ENCODE measurements at regions of chr4 and their contacts with region 1.

Region 1: DNA sequence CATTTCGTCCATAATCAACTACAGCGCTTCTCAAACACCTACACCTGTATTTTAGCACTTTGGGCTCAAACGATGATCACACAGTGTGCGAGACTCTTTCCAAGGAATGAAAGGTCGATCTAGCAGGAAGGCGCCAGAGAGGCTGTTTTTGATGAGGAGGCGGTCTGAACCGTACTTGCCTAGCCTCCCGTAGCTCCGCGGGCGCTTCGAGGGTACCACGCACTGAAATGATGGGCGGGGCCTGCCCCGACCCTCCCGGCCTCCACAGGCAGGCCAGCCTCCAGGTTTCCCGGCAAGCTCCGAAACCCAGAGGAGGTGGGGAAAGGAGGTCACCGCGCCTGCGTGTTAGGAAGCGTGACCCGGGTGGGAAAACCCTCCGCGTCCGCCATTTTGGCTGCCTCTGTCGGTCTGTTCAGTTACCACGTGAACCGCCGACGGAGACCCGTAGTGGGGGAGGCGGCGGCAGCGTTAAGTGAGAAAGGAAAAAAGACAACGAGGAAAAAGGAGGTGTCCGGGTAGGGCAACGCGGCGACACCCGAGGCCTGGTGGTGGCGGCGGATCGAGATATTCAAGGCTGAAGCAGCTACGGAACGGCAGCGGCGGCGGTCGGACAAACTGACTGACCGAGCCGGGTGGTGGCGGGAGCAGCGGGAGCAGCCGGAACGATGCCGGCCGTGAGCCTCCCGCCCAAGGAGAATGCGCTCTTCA is at the start of gene NAA15:
- DNase-seq: peak; percentile 88 to 99 (median 97)
- ATAC-seq: peak; percentile 95
- H3K4me3 ChIP-seq: peak within 1 kb of the TSS; percentile 83
- H3K4me3 Mint-ChIP-seq: peak within 1 kb of the TSS; percentile 96 to 100 (median 100)
- H3K27ac ChIP-seq: peak within 1 kb of the TSS; percentile 92
- H3K27ac Mint-ChIP-seq: peak within 1 kb of the TSS; percentile 97 to 100 (median 99)
- H3K4me1 ChIP-seq: peaks cover 22 to 28% of the 10 kb centered on the region in 2 donors
- H3K4me1 Mint-ChIP-seq: peaks cover 17 to 76% (median 58%) of the 10 kb centered on the region in 7 donors
- H3K27me3 ChIP-seq: no peaks in the 10 kb centered on the region
- H3K27me3 Mint-ChIP-seq: no peaks in the 10 kb centered on the region
- total RNA-seq, gene NAA15: 41.2 to 67.4 (median 49.0) TPM

Region 2: GRCh38 chr4:139015269-139015947 is 285.9 kb before region 1 on chr4 and contains the start of gene NOCT:
- CTCF ChIA-PET with region 1: interaction called, 3 read pairs
- POLR2A ChIA-PET with region 1: interaction called, 6 read pairs
- intact Hi-C with region 1: loop called (anchors 1 kb)
- DNase-seq: peak; percentile 82 to 92 (median 89)
- ATAC-seq: peak; percentile 94
- H3K4me3 ChIP-seq: peak within 1 kb of the TSS; percentile 65
- H3K4me3 Mint-ChIP-seq: peak within 1 kb of the TSS; percentile 82 to 93 (median 88)
- H3K27ac ChIP-seq: peak within 1 kb of the TSS; percentile 91
- H3K27ac Mint-ChIP-seq: peak within 1 kb of the TSS; percentile 76 to 99 (median 94)
- H3K4me1 ChIP-seq: peaks cover 7 to 10% of the 10 kb centered on the region in 2 donors
- H3K4me1 Mint-ChIP-seq: peaks cover 14 to 44% (median 24%) of the 10 kb centered on the region in 7 donors
- H3K27me3 ChIP-seq: no peaks in the 10 kb centered on the region
- H3K27me3 Mint-ChIP-seq: no peaks in the 10 kb centered on the region
- total RNA-seq, gene NOCT: 1.6 to 33.7 (median 8.8) TPM

Region 3: GRCh38 chr4:139229534-139230039 is 71.7 kb before region 1 on chr4:
- CTCF ChIA-PET with region 1: interaction called, 5 read pairs
- POLR2A ChIA-PET with region 1: interaction called, 3 read pairs
- intact Hi-C with region 1: loop called in 1 of 2 experiments (anchors 1 kb)
- DNase-seq: peak in 7 of 9 donors; percentile 11 to 58 (median 37)
- ATAC-seq: peak; percentile 84
- H3K4me3 ChIP-seq: no peak overlapping the region
- H3K4me3 Mint-ChIP-seq: no peak overlapping the region
- H3K27ac ChIP-seq: no peak overlapping the region
- H3K27ac Mint-ChIP-seq: no peak overlapping the region
- H3K4me1 ChIP-seq: no peaks in the 10 kb centered on the region
- H3K4me1 Mint-ChIP-seq: peaks cover 0 to 7% (median 4%) of the 10 kb centered on the region in 7 donors
- H3K27me3 ChIP-seq: no peaks in the 10 kb centered on the region
- H3K27me3 Mint-ChIP-seq: no peaks in the 10 kb centered on the region

Region 4: DNA sequence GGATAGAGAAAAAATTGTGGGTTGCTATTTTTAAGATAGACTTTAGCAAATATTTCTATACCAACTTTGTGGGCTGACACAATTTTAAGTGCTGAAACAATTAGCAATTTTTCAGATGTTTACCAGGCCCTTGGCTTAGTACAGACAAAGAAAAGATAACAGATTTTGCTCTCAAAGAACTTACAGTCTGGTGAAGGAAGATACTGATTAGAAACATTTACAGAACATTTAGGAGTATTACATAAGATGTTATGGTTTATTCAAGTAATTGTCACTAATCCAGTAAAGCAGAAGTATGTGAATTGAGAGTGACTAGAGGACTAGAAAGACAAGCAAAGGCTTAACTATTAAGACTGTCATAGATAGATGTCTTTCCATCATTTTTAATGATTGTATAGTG is 36.3 kb after region 1 on chr4:
- CTCF ChIA-PET with region 1: no interaction called
- POLR2A ChIA-PET with region 1: interaction called, 5 read pairs
- intact Hi-C with region 1: loop called in 1 of 2 experiments (anchors 5 kb)
- DNase-seq: no peak
- ATAC-seq: no peak
- H3K4me3 ChIP-seq: no peak overlapping the region
- H3K4me3 Mint-ChIP-seq: no peak overlapping the region
- H3K27ac ChIP-seq: no peak overlapping the region
- H3K27ac Mint-ChIP-seq: peak overlapping the region in 3 of 9 donors; percentile 1 to 29 (median 20)
- H3K4me1 ChIP-seq: no peaks in the 10 kb centered on the region
- H3K4me1 Mint-ChIP-seq: peaks cover 12 to 31% (median 15%) of the 10 kb centered on the region in 7 donors
- H3K27me3 ChIP-seq: no peaks in the 10 kb centered on the region
- H3K27me3 Mint-ChIP-seq: no peaks in the 10 kb centered on the region

Region 5: DNA sequence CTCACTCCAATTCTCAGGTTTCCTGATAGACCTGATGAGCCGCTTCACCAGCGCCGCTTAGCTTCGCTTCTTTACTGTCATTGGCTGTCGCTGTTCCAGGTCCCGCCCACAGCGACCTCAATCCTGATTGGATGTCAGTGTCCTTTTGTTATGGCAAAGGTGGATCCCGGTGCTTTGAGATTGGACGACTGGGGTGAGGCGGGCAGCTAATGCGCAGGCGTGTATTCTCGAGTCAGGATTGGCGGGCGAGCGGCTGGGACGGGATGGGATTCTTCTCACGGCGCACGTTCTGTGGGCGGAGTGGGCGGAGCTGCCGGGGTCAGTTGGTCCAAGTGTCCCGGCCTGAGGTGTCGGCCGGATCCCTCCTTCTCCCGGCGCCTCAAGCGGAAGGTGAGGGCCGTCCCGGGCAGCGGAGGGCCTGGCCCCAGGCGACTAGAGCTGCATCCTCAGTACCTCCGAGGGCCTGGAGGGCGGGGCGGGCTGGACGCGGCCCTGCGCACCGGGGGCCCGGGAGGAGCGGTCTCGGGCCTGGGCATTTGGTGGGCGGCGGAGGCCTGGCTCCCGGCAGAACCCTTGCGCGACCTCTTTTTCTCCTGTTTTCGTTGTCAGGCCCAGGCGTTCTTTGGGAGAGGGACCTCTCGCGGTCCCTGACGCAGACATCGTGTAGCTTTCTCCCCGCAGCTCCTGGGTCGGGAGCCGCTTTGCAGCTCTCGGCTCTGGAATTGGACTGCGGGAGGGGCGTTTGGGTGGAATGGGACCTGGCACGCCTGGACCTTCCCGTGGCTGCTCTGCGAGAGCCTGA is 1072.3 kb after region 1 on chr4 and contains the start of gene SCOC:
- CTCF ChIA-PET with region 1: no interaction called
- POLR2A ChIA-PET with region 1: no interaction called
- intact Hi-C with region 1: loop called (anchors 2 kb)
- DNase-seq: peak; percentile 80 to 98 (median 95)
- ATAC-seq: peak; percentile 98
- H3K4me3 ChIP-seq: peak within 1 kb of the TSS; percentile 79
- H3K4me3 Mint-ChIP-seq: peak within 1 kb of the TSS in 2 of 10 donors; percentile 87 to 90
- H3K27ac ChIP-seq: peak within 1 kb of the TSS; percentile 86
- H3K27ac Mint-ChIP-seq: peak within 1 kb of the TSS in 5 of 9 donors; percentile 47 to 90 (median 51)
- H3K4me1 ChIP-seq: peaks cover 6 to 7% of the 10 kb centered on the region in 2 donors
- H3K4me1 Mint-ChIP-seq: peaks cover 29 to 49% (median 43%) of the 10 kb centered on the region in 7 donors
- H3K27me3 ChIP-seq: no peaks in the 10 kb centered on the region
- H3K27me3 Mint-ChIP-seq: peaks cover 0 to 17% (median 0%) of the 10 kb centered on the region in 5 donors
- total RNA-seq, gene SCOC: 9.3 to 26.3 (median 22.6) TPM

Region 6: DNA sequence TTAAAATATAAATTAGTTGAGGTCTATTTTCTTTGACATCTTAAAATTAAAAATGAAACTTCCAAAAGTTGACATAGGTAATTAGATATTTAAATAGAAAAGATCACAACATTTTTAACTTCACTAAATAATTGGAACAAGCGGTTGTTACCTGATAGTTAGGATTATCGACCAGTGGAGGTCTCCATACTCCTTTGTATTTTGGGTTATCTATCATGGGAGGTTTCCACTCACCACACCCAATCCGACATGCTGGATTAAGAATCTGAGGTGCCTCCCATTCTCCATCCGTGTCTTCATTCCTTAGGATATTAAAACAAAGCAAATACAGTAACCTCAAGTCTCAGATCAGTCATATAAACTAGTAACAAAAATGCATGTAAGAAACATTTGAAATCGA is 1094.4 kb after region 1 on chr4:
- CTCF ChIA-PET with region 1: no interaction called
- POLR2A ChIA-PET with region 1: no interaction called
- intact Hi-C with region 1: no loop called
- DNase-seq: no peak
- ATAC-seq: no peak
- H3K4me3 ChIP-seq: no peak overlapping the region
- H3K4me3 Mint-ChIP-seq: no peak overlapping the region
- H3K27ac ChIP-seq: no peak overlapping the region
- H3K27ac Mint-ChIP-seq: no peak overlapping the region
- H3K4me1 ChIP-seq: no peaks in the 10 kb centered on the region
- H3K4me1 Mint-ChIP-seq: no peaks in the 10 kb centered on the region
- H3K27me3 ChIP-seq: no peaks in the 10 kb centered on the region
- H3K27me3 Mint-ChIP-seq: peaks cover 10 to 18% (median 16%) of the 10 kb centered on the region in 5 donors

Measured in naive thymus-derived CD4-positive, alpha-beta T cell (primary cell).